ENCODE measurements at regions of chr1 and their contacts with region 1.

Region 1: GRCh38 chr1:151008190-151008860 is at the start of gene PRUNE1:
- DNase-seq: peak; percentile 99
- ATAC-seq: peak; percentile 84
- H3K4me3 Mint-ChIP-seq: peak within 1 kb of the TSS; percentile 90
- H3K27ac Mint-ChIP-seq: peak within 1 kb of the TSS; percentile 96
- H3K4me1 Mint-ChIP-seq: peaks cover 63% of the 10 kb centered on the region
- H3K27me3 Mint-ChIP-seq: no peaks in the 10 kb centered on the region
- total RNA-seq, gene PRUNE1: 13.6 to 18.6 TPM

Region 2: GRCh38 chr1:150525348-150525747 is 483.0 kb before region 1 on chr1:
- CTCF ChIA-PET with region 1: no interaction called
- POLR2A ChIA-PET with region 1: no interaction called
- intact Hi-C with region 1: no loop called
- DNase-seq: no peak
- ATAC-seq: no peak
- H3K4me3 Mint-ChIP-seq: no peak overlapping the region
- H3K27ac Mint-ChIP-seq: no peak overlapping the region
- H3K4me1 Mint-ChIP-seq: no peaks in the 10 kb centered on the region
- H3K27me3 Mint-ChIP-seq: no peaks in the 10 kb centered on the region

Region 3: GRCh38 chr1:150613061-150613920 is 395.0 kb before region 1 on chr1:
- CTCF ChIA-PET with region 1: no interaction called
- POLR2A ChIA-PET with region 1: no interaction called
- intact Hi-C with region 1: loop called in 1 of 2 experiments (anchors 2 kb)
- DNase-seq: peak; percentile 78
- ATAC-seq: peak; percentile 63
- H3K4me3 Mint-ChIP-seq: peak overlapping the region; percentile 60
- H3K27ac Mint-ChIP-seq: peak overlapping the region; percentile 90
- H3K4me1 Mint-ChIP-seq: peaks cover 67% of the 10 kb centered on the region
- H3K27me3 Mint-ChIP-seq: no peaks in the 10 kb centered on the region

Region 4: DNA sequence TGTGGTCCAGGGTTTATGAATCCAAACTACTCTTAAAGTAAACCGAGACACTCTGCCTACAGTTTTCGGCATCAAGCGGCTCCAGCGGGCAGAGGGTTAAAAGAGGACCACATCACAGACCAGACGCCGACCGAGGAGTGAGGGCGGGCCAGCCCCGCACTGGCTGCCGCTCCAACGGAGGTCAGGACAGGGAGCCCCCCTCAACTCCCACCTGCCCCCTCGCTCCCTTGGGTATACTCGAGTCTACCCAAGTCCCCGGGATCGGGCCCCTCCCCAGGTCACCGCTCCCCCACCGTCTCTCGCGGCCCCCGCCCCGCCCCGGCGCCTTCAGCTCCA is 132.2 kb before region 1 on chr1:
- CTCF ChIA-PET with region 1: no interaction called
- POLR2A ChIA-PET with region 1: no interaction called
- intact Hi-C with region 1: loop called in 1 of 2 experiments (anchors 1 kb)
- DNase-seq: no peak
- ATAC-seq: peak; percentile 37
- H3K4me3 Mint-ChIP-seq: peak overlapping the region; percentile 88
- H3K27ac Mint-ChIP-seq: peak overlapping the region; percentile 95
- H3K4me1 Mint-ChIP-seq: peaks cover 25% of the 10 kb centered on the region
- H3K27me3 Mint-ChIP-seq: no peaks in the 10 kb centered on the region

Region 5: DNA sequence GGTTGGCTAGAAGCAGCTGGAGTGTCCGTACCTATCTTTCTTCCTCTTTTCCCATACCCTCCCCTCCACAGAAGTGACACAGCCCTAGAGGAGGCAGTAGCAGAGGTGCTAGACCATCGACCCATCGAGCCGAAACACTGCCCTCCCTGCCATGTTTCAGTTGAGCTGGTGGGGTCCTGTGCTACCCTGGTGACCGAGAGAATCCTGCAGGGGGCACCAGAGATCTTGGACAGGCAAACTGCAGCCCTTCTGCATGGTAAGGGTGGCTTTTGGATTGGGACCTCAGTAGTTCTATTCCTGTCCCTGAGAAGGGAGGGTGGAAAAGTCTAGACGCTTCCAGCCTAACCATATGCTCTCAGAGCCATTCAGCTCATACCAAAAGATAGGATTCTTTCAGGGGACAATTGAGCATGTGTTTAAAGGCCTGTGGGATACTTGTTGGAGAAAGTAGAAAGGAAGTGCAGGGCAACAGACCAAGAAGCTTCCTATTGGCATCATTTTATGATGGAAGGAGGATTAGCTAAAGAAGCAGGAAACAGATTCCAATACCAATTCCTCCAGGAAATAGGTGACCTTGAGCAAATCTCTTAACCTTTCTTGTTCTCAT is 16.3 kb after region 1 on chr1:
- CTCF ChIA-PET with region 1: interaction called, 17 read pairs
- POLR2A ChIA-PET with region 1: no interaction called
- intact Hi-C with region 1: no loop called
- DNase-seq: peak; percentile 91
- ATAC-seq: peak; percentile 100
- H3K4me3 Mint-ChIP-seq: peak overlapping the region; percentile 30
- H3K27ac Mint-ChIP-seq: peak overlapping the region; percentile 65
- H3K4me1 Mint-ChIP-seq: peaks cover 5% of the 10 kb centered on the region
- H3K27me3 Mint-ChIP-seq: no peaks in the 10 kb centered on the region

Region 6: GRCh38 chr1:151037032-151037431 is 28.7 kb after region 1 on chr1:
- CTCF ChIA-PET with region 1: no interaction called
- POLR2A ChIA-PET with region 1: no interaction called
- intact Hi-C with region 1: no loop called
- DNase-seq: no peak
- ATAC-seq: no peak
- H3K4me3 Mint-ChIP-seq: no peak overlapping the region
- H3K27ac Mint-ChIP-seq: no peak overlapping the region
- H3K4me1 Mint-ChIP-seq: peaks cover 3% of the 10 kb centered on the region
- H3K27me3 Mint-ChIP-seq: no peaks in the 10 kb centered on the region

Region 7: DNA sequence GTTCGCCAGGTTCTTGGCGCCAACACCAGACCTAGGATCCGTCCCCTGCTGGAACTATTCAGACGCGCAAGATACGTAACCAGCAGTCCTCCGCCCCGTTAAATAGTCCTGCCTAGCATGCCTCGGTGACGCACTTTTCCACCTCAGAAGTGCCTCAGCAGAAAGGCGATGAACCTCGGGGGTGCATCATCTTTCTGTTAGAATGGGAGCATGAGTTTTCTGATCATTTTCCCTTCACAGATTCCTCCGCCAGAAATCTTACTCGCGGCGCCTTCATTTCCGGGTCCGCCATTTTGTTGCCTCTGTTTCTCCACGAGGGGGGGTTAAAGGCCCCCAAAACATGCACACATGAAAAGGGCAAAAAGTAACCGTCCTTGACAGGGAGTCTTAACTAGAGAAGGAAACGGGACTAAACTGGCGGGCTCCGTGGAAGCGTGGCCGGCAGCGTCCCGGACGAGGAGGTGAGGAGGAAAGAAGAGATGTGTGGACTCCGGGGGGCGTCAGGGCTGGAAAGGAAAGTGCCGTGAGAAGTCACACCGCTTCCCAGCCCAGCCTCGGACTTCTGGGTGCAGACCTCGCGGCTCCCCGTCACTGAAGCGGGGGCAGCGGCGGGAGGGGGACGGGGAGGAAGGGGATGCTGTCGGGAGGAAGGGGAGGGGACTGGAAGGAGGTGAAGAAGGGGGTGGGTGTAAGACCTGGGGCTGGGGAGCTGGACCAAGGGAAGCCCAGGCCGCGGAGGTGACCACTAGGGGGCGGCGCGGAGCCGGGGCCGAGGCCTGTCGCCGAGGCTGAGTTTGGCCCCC is 62.4 kb after region 1 on chr1 and contains the start of gene GABPB2:
- CTCF ChIA-PET with region 1: interaction called, 7 read pairs
- POLR2A ChIA-PET with region 1: no interaction called
- intact Hi-C with region 1: loop called (anchors 1 kb)
- DNase-seq: peak; percentile 93
- ATAC-seq: peak; percentile 86
- H3K4me3 Mint-ChIP-seq: peak within 1 kb of the TSS; percentile 99
- H3K27ac Mint-ChIP-seq: peak within 1 kb of the TSS; percentile 100
- H3K4me1 Mint-ChIP-seq: peaks cover 18% of the 10 kb centered on the region
- H3K27me3 Mint-ChIP-seq: no peaks in the 10 kb centered on the region
- total RNA-seq, gene GABPB2: 16.6 to 19.2 TPM

Region 8: DNA sequence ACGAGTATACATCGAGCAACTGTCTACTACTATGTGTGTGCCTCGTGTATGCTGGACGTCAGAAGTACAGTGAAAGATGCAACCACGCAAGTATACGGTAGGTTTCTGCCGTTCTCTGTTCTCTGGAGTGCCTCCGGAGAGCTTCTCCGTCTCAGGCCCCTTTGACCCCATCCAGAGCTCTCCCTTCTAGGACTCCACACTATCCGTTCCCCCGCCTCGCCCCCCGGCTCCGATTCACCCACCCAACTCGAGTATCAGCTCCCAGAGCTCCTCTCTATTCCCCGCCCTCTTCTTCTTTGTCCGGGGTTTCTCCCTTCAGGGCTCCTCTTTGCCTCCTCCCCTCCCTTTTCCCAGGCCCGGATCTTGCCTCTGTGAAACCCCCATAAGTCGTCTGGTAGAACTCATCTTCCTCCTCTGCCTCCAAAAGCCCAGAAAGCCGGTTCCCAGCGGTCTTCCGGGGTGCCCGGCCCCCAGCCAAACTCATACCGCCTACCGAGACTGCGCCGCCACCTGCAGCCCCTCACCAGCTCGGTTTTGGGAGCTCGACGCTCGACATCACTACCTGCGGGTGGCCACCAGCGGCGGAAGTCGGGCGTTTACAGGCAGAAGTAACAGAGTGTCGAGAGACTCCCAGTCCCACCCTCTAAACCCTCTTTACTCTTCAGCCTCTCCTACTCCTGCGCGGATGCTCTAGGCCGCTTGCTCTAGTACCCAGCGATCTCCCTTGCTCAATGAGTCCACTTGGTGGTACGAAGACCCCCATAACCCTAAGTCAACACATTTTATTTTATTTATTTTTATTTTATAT is 181.5 kb after region 1 on chr1 and contains the start of gene VPS72:
- CTCF ChIA-PET with region 1: no interaction called
- POLR2A ChIA-PET with region 1: no interaction called
- intact Hi-C with region 1: loop called in 1 of 2 experiments (anchors 1 kb)
- DNase-seq: peak; percentile 93
- ATAC-seq: peak; percentile 96
- H3K4me3 Mint-ChIP-seq: peak within 1 kb of the TSS; percentile 96
- H3K27ac Mint-ChIP-seq: peak within 1 kb of the TSS; percentile 98
- H3K4me1 Mint-ChIP-seq: peaks cover 27% of the 10 kb centered on the region
- H3K27me3 Mint-ChIP-seq: no peaks in the 10 kb centered on the region
- total RNA-seq, gene VPS72: 77.1 to 77.8 TPM

Region 9: DNA sequence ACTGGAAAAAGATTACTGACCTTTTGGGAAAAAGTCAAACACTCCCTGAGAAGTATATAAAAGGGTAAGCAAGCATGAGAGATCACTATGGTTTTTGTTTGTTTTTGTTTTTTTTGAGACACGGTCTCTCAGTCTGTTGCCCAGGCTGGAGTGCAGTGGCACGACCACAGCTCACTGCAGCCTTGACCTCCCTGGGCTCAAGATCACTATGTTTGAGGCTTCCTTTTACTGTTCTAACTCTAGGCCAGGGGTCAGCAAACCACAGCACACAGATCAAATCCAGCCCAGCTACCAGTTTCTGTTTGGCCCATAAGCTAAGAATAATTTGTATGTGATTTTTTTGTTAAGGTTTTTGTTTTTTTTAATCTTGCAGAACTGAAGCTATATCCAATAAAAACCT is 416.8 kb after region 1 on chr1:
- CTCF ChIA-PET with region 1: no interaction called
- POLR2A ChIA-PET with region 1: no interaction called
- intact Hi-C with region 1: no loop called
- DNase-seq: no peak
- ATAC-seq: no peak
- H3K4me3 Mint-ChIP-seq: no peak overlapping the region
- H3K27ac Mint-ChIP-seq: no peak overlapping the region
- H3K4me1 Mint-ChIP-seq: peaks cover under 1% of the 10 kb centered on the region
- H3K27me3 Mint-ChIP-seq: no peaks in the 10 kb centered on the region